ENCODE measurements at regions of chr9 and their contacts with region 1.

Region 1: GRCh38 chr9:88988796-88989560 is 2.3 kb upstream of the S1PR3 start:
- DNase-seq: no peak
- H3K4me3 ChIP-seq: peak overlapping the region in 1 of 8 donors; percentile 3
- H3K27ac ChIP-seq: peak overlapping the region in 7 of 8 donors; percentile 54 to 71 (median 63)
- H3K4me1 ChIP-seq: peaks cover 11 to 57% (median 28%) of the 10 kb centered on the region in 6 donors
- H3K27me3 ChIP-seq: peaks cover 0 to 55% (median 8%) of the 10 kb centered on the region in 7 donors
- CTCF ChIP-seq: no peak
- POLR2A ChIP-seq: no peak

Region 2: GRCh38 chr9:88803546-88804253 is 185.3 kb before region 1 on chr9:
- intact Hi-C with region 1: no loop called
- DNase-seq: no peak
- H3K4me3 ChIP-seq: no peak overlapping the region
- H3K27ac ChIP-seq: no peak overlapping the region
- H3K4me1 ChIP-seq: peaks cover 0 to 12% (median 8%) of the 10 kb centered on the region in 6 donors
- H3K27me3 ChIP-seq: peaks cover 0 to 19% (median 0%) of the 10 kb centered on the region in 7 donors
- CTCF ChIP-seq: no peak
- POLR2A ChIP-seq: no peak

Region 3: DNA sequence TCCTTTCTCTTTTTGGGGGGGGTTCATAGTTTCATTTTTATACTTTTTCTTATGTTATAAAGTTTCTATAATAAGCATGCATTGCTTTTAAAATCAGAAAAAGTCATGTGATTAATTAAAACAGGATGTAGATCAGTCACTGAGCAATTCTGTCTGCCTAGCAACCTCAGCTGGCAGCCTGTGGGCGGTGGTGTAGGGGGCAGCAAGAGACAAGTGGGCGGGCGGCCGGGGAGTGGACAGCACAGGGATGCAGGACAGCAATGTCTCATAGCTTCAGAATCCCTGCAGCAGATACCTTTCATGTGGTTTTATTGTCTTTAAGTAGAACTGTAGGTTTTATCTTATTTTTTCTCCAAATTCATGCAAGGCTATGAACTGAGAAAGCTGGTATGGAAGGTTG is 99.6 kb before region 1 on chr9:
- intact Hi-C with region 1: loop called (anchors 10 kb)
- DNase-seq: no peak
- H3K4me3 ChIP-seq: no peak overlapping the region
- H3K27ac ChIP-seq: no peak overlapping the region
- H3K4me1 ChIP-seq: no peaks in the 10 kb centered on the region
- H3K27me3 ChIP-seq: peaks cover 0 to 9% (median 0%) of the 10 kb centered on the region in 7 donors
- CTCF ChIP-seq: no peak
- POLR2A ChIP-seq: no peak